Posterior vena cava (tissue), 2 donors: ENCODE measurements at regions of chr20 and their contacts with region 1.

Region 1: GRCh38 chr20:35010405-35011192 is 54.9 kb downstream of the MYH7B start:
- DNase-seq: peak; percentile 65

Region 2: GRCh38 chr20:35165221-35166185 is 154.9 kb after region 1 on chr20:
- intact Hi-C with region 1: loop called in 1 of 2 experiments (anchors 1 kb)
- DNase-seq: no peak